Activated CD4-positive, alpha-beta memory T cell treated with anti-CD3 and anti-CD28 coated beads for 36 hours (primary cell): ENCODE measurements at regions of chr10 and their contacts with region 1.

Region 1: GRCh38 chr10:5623081-5623748 is 43.2 kb downstream of the ASB13 start:
- DNase-seq: peak; percentile 90
- H3K4me3 Mint-ChIP-seq: no peak overlapping the region
- H3K27ac Mint-ChIP-seq: no peak overlapping the region
- H3K4me1 Mint-ChIP-seq: peaks cover 10% of the 10 kb centered on the region
- H3K27me3 Mint-ChIP-seq: peaks cover 1% of the 10 kb centered on the region

Region 2: GRCh38 chr10:5293691-5294550 is 329.3 kb before region 1 on chr10:
- CTCF ChIA-PET with region 1: no interaction called
- POLR2A ChIA-PET with region 1: no interaction called
- intact Hi-C with region 1: loop called (anchors 10 kb)
- DNase-seq: peak; percentile 91
- H3K4me3 Mint-ChIP-seq: peak overlapping the region; percentile 86
- H3K27ac Mint-ChIP-seq: peak overlapping the region; percentile 95
- H3K4me1 Mint-ChIP-seq: peaks cover 79% of the 10 kb centered on the region
- H3K27me3 Mint-ChIP-seq: no peaks in the 10 kb centered on the region

Region 3: GRCh38 chr10:5434017-5434753 is 189.0 kb before region 1 on chr10:
- CTCF ChIA-PET with region 1: interaction called, 237 read pairs
- POLR2A ChIA-PET with region 1: no interaction called
- intact Hi-C with region 1: no loop called
- DNase-seq: no peak
- H3K4me3 Mint-ChIP-seq: no peak overlapping the region
- H3K27ac Mint-ChIP-seq: no peak overlapping the region
- H3K4me1 Mint-ChIP-seq: peaks cover 17% of the 10 kb centered on the region
- H3K27me3 Mint-ChIP-seq: no peaks in the 10 kb centered on the region

Region 4: DNA sequence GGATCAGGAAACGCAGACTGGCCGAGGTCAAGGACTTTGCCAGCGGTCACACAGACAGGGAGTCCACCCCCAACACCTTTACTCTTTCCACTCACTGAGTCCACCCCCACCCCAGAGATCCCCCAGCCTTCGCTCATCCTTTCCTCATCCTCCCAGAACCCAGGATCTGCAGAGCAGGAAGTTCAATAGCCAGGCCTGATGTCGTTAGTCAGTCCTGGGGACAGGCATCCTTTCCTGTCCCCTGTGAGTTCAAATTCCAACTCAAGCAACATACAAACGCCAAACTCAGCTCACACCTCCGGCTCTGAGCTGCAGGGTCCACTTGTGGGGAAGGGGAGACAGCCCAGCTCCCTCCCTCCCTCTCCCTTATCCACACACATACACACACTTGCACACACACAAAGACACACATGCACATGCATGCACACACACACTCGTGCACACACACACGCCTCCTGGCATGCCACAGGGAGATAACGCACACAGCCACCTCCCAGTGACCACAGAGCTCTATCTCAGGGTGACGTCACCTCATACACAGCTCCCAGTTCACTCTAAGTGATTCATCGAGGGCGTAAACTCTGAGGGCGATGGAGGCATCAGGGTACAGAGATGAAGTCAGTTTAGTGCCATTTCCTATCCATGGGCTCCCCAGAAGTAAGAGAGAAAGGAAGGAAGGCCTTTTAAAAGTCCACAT is 74.5 kb before region 1 on chr10:
- CTCF ChIA-PET with region 1: interaction called, 17 read pairs
- POLR2A ChIA-PET with region 1: no interaction called
- intact Hi-C with region 1: loop called (anchors 5 kb)
- DNase-seq: peak; percentile 78
- H3K4me3 Mint-ChIP-seq: no peak overlapping the region
- H3K27ac Mint-ChIP-seq: no peak overlapping the region
- H3K4me1 Mint-ChIP-seq: peaks cover 27% of the 10 kb centered on the region
- H3K27me3 Mint-ChIP-seq: no peaks in the 10 kb centered on the region

Region 5: GRCh38 chr10:5648584-5649457 is 25.6 kb after region 1 on chr10:
- CTCF ChIA-PET with region 1: no interaction called
- POLR2A ChIA-PET with region 1: no interaction called
- intact Hi-C with region 1: no loop called
- DNase-seq: no peak
- H3K4me3 Mint-ChIP-seq: no peak overlapping the region
- H3K27ac Mint-ChIP-seq: peak overlapping the region; percentile 69
- H3K4me1 Mint-ChIP-seq: peaks cover 3% of the 10 kb centered on the region
- H3K27me3 Mint-ChIP-seq: no peaks in the 10 kb centered on the region

Region 6: GRCh38 chr10:5666008-5666829 is 43.0 kb after region 1 on chr10 and contains the start of gene ASB13:
- CTCF ChIA-PET with region 1: interaction called, 10 read pairs
- POLR2A ChIA-PET with region 1: no interaction called
- intact Hi-C with region 1: loop called (anchors 2 kb)
- DNase-seq: peak; percentile 60
- H3K4me3 Mint-ChIP-seq: peak within 1 kb of the TSS; percentile 84
- H3K27ac Mint-ChIP-seq: peak within 1 kb of the TSS; percentile 57
- H3K4me1 Mint-ChIP-seq: peaks cover 18% of the 10 kb centered on the region
- H3K27me3 Mint-ChIP-seq: no peaks in the 10 kb centered on the region
- total RNA-seq, gene ASB13: 12.1 to 12.5 TPM